MCF 10A (cell line): ENCODE measurements at regions of chr11 and their contacts with region 1.

Region 1: GRCh38 chr11:15159085-15159484 is 44.4 kb downstream of the INSC start:
- DNase-seq: peak; percentile 62
- H3K4me3 Mint-ChIP-seq: no peak overlapping the region
- H3K27ac Mint-ChIP-seq: no peak overlapping the region
- H3K4me1 Mint-ChIP-seq: peaks cover 22% of the 10 kb centered on the region
- H3K27me3 Mint-ChIP-seq: no peaks in the 10 kb centered on the region
- CTCF ChIP-seq: peak; percentile 79

Region 2: GRCh38 chr11:14656536-14657457 is 502.3 kb before region 1 on chr11:
- CTCF ChIA-PET with region 1: no interaction called
- POLR2A ChIA-PET with region 1: no interaction called
- intact Hi-C with region 1: no loop called
- DNase-seq: no peak
- H3K4me3 Mint-ChIP-seq: no peak overlapping the region
- H3K27ac Mint-ChIP-seq: no peak overlapping the region
- H3K4me1 Mint-ChIP-seq: no peaks in the 10 kb centered on the region
- H3K27me3 Mint-ChIP-seq: peaks cover 56% of the 10 kb centered on the region
- CTCF ChIP-seq: no peak

Region 3: DNA sequence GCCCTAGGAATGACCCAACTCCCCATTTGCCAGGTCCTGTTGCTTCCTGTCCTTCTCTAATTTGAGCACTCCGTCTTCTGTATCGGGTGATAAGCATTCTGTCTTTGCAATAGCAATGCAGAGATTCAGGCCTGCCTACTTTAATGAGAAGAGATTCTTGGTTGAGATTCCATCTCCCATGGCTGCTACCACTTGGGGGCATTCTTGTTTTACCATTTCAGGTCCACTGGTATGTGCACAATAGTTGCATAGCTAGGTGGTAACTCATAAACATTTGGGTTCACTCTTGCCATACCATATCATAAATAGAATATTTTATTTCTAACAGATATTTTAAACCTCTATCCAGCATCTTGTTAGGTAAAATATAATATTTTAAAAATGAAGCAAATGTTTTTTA is 120.1 kb before region 1 on chr11:
- CTCF ChIA-PET with region 1: no interaction called
- POLR2A ChIA-PET with region 1: no interaction called
- intact Hi-C with region 1: loop called (anchors 2 kb)
- DNase-seq: peak; percentile 67
- H3K4me3 Mint-ChIP-seq: no peak overlapping the region
- H3K27ac Mint-ChIP-seq: no peak overlapping the region
- H3K4me1 Mint-ChIP-seq: no peaks in the 10 kb centered on the region
- H3K27me3 Mint-ChIP-seq: no peaks in the 10 kb centered on the region
- CTCF ChIP-seq: peak; percentile 64

Region 4: DNA sequence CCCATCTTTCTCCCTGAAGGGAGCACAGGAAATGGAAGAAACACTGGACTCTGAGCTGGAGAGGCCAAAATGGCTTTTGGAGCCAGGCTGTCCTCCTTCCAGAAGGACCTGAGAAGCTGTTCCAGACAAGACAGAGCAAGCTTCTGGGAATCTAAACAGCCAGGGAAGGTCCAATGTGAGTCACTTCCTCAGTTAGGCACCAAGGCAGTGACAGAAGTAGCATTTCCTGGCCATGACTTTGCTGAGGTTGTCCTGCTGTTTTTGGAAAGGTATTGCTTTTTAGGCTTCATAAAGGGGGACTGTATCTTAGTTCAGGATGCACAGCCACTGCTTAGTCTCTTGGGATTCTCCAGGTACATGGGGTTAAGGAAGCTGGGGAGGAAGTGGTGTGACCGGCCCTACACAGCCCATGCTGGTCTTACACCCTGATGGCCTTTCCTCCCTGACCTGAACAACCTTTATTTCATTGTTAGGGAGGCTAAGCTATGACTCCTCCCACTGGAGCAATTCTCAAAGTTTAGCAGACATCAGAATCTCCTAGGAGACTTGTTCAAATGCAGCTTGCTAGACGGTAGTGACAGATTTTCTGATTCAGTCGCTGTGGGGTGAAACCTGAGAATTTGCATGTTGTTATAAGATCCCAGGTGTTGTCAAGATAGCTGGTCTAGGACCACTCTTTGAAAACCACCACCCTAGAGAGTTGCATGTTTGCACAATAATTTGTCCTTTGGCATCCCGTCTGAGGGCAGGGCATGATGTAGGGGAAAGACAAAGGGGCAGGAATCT is 51.2 kb before region 1 on chr11:
- CTCF ChIA-PET with region 1: interaction called, 10 read pairs
- POLR2A ChIA-PET with region 1: no interaction called
- intact Hi-C with region 1: no loop called
- DNase-seq: peak; percentile 62
- H3K4me3 Mint-ChIP-seq: no peak overlapping the region
- H3K27ac Mint-ChIP-seq: peak overlapping the region; percentile 74
- H3K4me1 Mint-ChIP-seq: peaks cover 31% of the 10 kb centered on the region
- H3K27me3 Mint-ChIP-seq: no peaks in the 10 kb centered on the region
- CTCF ChIP-seq: no peak

Region 5: GRCh38 chr11:15169815-15170551 is 10.9 kb after region 1 on chr11:
- CTCF ChIA-PET with region 1: interaction called, 13 read pairs
- POLR2A ChIA-PET with region 1: interaction called, 4 read pairs
- intact Hi-C with region 1: no loop called
- DNase-seq: peak; percentile 9
- H3K4me3 Mint-ChIP-seq: no peak overlapping the region
- H3K27ac Mint-ChIP-seq: no peak overlapping the region
- H3K4me1 Mint-ChIP-seq: peaks cover 9% of the 10 kb centered on the region
- H3K27me3 Mint-ChIP-seq: no peaks in the 10 kb centered on the region
- CTCF ChIP-seq: no peak